ENCODE measurements at regions of chr12 and their contacts with region 1.

Region 1: GRCh38 chr12:27305673-27306456 is 26.8 kb upstream of the BMAL2 start:
- DNase-seq: peak; percentile 64
- H3K4me3 ChIP-seq: no peak overlapping the region
- H3K27ac ChIP-seq: no peak overlapping the region
- H3K4me1 ChIP-seq: peaks cover 6% of the 10 kb centered on the region
- H3K27me3 ChIP-seq: no peaks in the 10 kb centered on the region
- CTCF ChIP-seq: peak in 1 of 2 donors; percentile 12
- POLR2A ChIP-seq: no peak

Region 2: DNA sequence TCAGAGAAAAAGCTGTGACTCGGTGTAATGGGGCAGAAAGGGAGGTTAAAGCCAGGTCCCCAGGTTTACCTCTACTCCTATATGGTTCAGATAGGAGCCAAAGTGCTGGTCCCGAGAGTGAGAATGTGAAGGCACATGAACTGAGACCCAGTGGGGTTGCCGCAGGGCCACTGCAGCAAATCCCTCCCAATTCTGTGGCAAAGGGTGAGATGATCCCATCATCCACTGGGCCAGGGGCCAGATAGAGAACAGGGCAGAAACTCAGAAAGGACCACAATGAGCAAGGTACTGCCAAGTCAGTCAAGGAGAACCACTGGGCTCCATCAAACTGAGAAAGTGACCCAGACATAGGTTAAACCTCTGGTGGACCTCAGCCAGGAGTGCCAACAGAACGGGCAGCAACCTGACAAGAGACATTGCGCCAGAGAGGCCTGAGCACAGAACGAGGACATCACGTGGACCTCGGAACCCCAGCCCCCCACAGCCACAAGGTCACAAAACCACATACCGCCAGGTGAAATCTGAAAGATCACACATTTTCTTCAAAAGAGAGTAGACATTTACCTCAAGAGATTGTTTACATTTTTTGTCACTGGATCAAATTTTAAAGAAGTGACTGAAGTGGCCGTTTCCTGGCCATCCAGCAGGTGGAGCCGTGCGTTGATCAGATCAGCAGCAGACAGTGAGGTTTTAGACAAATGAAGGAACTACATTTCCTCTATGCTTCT is 452.4 kb before region 1 on chr12:
- CTCF ChIA-PET with region 1: interaction called, 4 read pairs
- POLR2A ChIA-PET with region 1: no interaction called
- dilution Hi-C with region 1: no loop called
- intact Hi-C with region 1: loop called (anchors 10 kb)
- DNase-seq: peak; percentile 74
- H3K4me3 ChIP-seq: no peak overlapping the region
- H3K27ac ChIP-seq: no peak overlapping the region
- H3K4me1 ChIP-seq: peaks cover 32% of the 10 kb centered on the region
- H3K27me3 ChIP-seq: no peaks in the 10 kb centered on the region
- CTCF ChIP-seq: peak; percentile 77 to 94
- POLR2A ChIP-seq: no peak

Region 3: DNA sequence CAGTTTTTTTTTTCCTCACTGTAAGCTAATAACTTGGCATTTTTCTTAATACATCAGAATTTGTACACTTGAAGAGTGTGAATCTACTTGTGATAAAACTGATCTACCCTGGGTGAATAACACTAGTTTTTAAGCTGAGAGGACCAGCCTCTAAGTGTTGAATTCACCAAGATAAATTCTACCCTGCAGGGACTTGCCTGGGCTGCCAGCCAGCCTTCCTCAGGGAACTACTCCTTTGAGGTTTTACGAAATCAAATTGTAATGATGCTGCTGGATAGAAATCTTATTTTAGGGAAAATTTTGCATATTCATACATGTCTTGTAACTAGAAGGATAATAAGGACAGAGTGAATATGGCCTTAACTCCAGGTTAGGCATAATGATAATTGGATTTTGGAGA is 281.6 kb before region 1 on chr12:
- CTCF ChIA-PET with region 1: interaction called, 26 read pairs
- POLR2A ChIA-PET with region 1: interaction called, 7 read pairs
- dilution Hi-C with region 1: no loop called
- intact Hi-C with region 1: no loop called
- DNase-seq: no peak
- H3K4me3 ChIP-seq: no peak overlapping the region
- H3K27ac ChIP-seq: no peak overlapping the region
- H3K4me1 ChIP-seq: peaks cover 5% of the 10 kb centered on the region
- H3K27me3 ChIP-seq: no peaks in the 10 kb centered on the region
- CTCF ChIP-seq: no peak
- POLR2A ChIP-seq: no peak

Region 4: GRCh38 chr12:27142101-27142721 is 163.7 kb before region 1 on chr12:
- CTCF ChIA-PET with region 1: interaction called, 21 read pairs
- POLR2A ChIA-PET with region 1: no interaction called
- dilution Hi-C with region 1: no loop called
- intact Hi-C with region 1: loop called (anchors 1 kb)
- DNase-seq: peak; percentile 83
- H3K4me3 ChIP-seq: no peak overlapping the region
- H3K27ac ChIP-seq: no peak overlapping the region
- H3K4me1 ChIP-seq: peaks cover 2% of the 10 kb centered on the region
- H3K27me3 ChIP-seq: no peaks in the 10 kb centered on the region
- CTCF ChIP-seq: peak; percentile 79 to 86
- POLR2A ChIP-seq: no peak

Region 5: DNA sequence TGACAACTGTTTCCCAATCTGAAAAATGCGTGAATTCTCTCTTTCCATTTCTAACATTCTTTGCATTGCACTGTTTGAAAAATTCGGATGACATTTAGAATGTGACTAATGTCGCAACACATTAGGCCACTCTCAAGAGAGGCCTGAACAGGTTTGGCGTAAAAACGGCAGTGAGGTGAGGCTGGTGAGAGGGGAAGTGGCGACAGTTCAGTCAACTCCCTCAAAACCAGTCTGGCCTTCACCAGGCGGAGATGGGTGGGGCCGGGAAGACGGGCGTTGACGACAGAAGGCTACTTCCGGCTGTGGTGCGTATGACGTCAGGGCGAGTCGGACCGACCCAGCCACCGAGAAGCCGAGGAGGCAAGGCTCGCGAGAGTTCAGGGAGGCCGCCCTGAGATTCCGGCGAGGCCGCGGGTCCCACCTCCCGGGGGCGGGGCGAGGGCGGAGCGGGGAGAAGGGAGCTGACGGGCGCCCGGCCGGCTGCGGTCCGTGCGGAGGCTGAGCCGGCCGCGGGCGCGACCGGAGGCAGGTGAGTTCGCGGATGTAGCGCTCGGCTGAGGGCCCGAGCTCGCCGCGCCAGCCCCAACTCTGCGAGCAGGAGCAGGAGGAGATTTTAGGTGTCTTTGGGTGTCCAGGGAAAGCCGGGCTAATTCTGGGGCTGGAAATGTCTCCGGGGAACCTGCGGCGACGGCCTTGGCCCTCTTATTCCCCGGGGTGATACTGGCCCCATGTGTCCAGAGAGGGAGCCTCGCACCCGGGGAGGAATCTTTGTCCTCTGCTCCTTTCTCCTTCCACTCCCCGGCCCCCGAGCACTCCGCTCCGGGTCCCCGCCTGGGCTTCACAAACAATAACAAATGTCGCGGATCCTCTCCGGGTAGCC is 61.8 kb before region 1 on chr12 and contains the start of gene STK38L:
- CTCF ChIA-PET with region 1: interaction called, 52 read pairs
- POLR2A ChIA-PET with region 1: interaction called, 5 read pairs
- dilution Hi-C with region 1: no loop called
- intact Hi-C with region 1: loop called (anchors 1 kb)
- DNase-seq: peak; percentile 92
- H3K4me3 ChIP-seq: peak within 1 kb of the TSS; percentile 80 to 87 (median 86)
- H3K27ac ChIP-seq: peak within 1 kb of the TSS; percentile 76
- H3K4me1 ChIP-seq: peaks cover 14% of the 10 kb centered on the region
- H3K27me3 ChIP-seq: no peaks in the 10 kb centered on the region
- CTCF ChIP-seq: peak in 1 of 2 donors; percentile 10
- POLR2A ChIP-seq: peak; percentile 97
- total RNA-seq, gene STK38L: 58.4 and 60.0 TPM in 2 replicates

Region 6: GRCh38 chr12:27293463-27293862 is 12.4 kb before region 1 on chr12:
- CTCF ChIA-PET with region 1: interaction called, 24 read pairs
- POLR2A ChIA-PET with region 1: no interaction called
- dilution Hi-C with region 1: no loop called
- intact Hi-C with region 1: no loop called
- DNase-seq: peak; percentile 62
- H3K4me3 ChIP-seq: no peak overlapping the region
- H3K27ac ChIP-seq: peak overlapping the region; percentile 87
- H3K4me1 ChIP-seq: peaks cover 44% of the 10 kb centered on the region
- H3K27me3 ChIP-seq: no peaks in the 10 kb centered on the region
- CTCF ChIP-seq: no peak
- POLR2A ChIP-seq: no peak

Region 7: DNA sequence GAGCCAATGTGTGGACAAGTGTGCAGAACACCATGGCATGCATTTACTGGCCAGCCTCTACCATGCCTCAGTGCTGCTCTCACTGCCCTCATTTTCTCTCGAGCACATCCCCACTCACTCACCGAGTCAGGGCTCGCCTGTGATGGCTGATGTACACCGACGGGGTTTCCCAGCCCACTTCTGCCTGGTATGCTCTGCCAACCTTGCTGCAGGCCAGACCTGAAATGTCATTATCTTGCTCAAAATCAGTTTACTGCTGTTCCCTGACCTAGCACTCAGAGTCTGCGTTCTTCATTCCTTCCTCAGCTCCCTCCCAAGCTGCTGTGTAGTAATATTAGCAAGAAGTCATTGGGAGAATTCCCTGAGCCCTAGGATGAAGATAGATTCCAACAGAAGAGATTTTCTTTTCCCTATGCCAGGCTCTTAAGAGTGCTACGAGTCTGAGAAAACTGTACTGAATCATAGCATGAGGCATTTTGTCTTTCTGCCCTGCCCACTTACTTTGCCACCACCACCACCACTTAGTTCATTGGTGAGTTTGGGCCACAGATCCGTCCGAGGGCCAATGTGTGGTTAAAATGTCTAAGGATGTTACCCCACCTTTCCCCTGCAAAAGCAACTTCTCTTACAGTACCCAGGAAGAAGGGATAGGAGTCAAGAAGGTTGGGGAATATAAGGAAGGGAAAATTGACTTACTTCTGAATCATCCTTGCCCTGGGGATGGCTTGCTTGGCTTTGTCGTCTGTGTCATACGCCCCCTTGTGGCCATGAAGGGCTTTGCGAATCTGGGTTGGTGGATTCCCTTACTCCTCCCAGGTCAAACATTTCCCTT is 77.8 kb after region 1 on chr12:
- CTCF ChIA-PET with region 1: interaction called, 10 read pairs
- POLR2A ChIA-PET with region 1: no interaction called
- dilution Hi-C with region 1: no loop called
- intact Hi-C with region 1: no loop called
- DNase-seq: peak; percentile 80
- H3K4me3 ChIP-seq: no peak overlapping the region
- H3K27ac ChIP-seq: no peak overlapping the region
- H3K4me1 ChIP-seq: no peaks in the 10 kb centered on the region
- H3K27me3 ChIP-seq: no peaks in the 10 kb centered on the region
- CTCF ChIP-seq: peak; percentile 89 to 93
- POLR2A ChIP-seq: no peak

Measured in endothelial cell of umbilical vein (primary cell).